ENCODE measurements at regions of chr2 and their contacts with region 1.

Region 1: GRCh38 chr2:169109502-169110409 is 40.4 kb downstream of the DHRS9 start:
- DNase-seq: peak; percentile 90

Region 2: DNA sequence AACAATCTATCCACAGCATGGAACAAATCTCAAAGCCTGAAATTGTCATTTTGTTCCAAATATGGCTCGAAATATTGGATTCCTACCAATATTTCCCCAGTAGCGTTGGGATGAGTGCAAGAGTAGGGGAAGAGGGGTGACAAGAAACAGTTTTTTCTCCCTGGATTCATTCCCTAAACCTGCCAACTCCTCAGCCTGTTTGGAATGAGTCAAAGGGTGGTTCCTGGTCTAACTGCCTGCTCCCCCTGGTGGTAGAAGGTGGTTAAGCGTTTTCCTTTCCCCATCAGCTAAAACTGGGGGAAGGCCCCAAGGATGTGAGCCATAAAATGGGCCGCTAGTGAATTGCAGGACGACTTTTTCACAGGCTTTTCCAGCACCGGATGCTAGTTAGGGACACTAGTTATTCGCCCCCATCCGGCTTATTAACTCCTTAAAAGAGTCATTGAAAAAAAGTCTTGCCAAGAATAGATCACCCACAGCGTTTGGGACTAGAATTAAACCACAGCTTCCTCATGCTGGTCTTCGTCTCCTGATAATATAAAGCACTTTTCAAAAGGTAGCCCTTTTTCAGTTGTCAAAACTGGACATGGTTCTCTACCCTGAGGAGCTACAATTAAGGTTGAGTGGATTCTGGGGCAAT is 32.1 kb after region 1 on chr2:
- intact Hi-C with region 1: loop called (anchors 2 kb)
- DNase-seq: peak; percentile 76

Region 3: GRCh38 chr2:169275696-169276444 is 166.1 kb after region 1 on chr2:
- intact Hi-C with region 1: loop called (anchors 10 kb)
- DNase-seq: no peak

Region 4: DNA sequence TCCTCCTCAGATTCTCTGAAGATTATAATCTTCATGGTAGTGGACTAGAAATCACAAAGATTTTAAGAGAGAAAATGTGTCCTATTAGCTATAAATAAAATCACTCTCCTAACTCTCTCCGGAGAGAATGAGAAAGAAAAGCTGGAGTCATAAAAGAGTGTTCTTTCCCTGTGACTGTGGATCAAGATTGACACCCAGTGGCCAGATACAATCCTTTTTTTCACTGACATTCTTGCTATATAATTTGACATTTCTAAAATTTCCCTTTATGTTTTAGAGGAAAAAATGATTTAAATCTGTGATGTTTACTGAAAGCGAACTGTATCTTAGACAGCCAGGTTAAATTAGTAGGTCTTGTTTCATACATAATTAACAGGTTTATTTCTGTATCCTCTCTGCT is 287.9 kb after region 1 on chr2:
- intact Hi-C with region 1: loop called (anchors 10 kb)
- DNase-seq: no peak

Region 5: GRCh38 chr2:169573160-169573973 is 463.6 kb after region 1 on chr2 and contains the start of gene FASTKD1:
- intact Hi-C with region 1: no loop called
- DNase-seq: peak; percentile 95
- total RNA-seq, gene FASTKD1: 65.2 TPM

Measured in cardiac septum (tissue), 1 donor.